Left ventricle myocardium inferior (tissue), 1 donor: ENCODE measurements at regions of chr19 and their contacts with region 1.

Region 1: GRCh38 chr19:54231077-54231931 is 8.5 kb upstream of the LILRB3 start:
- DNase-seq: peak; percentile 84
- H3K4me3 ChIP-seq: no peak overlapping the region
- H3K27ac ChIP-seq: no peak overlapping the region
- H3K4me1 ChIP-seq: no peaks in the 10 kb centered on the region
- H3K27me3 ChIP-seq: peaks cover 48% of the 10 kb centered on the region
- CTCF ChIP-seq: peak; percentile 94

Region 2: DNA sequence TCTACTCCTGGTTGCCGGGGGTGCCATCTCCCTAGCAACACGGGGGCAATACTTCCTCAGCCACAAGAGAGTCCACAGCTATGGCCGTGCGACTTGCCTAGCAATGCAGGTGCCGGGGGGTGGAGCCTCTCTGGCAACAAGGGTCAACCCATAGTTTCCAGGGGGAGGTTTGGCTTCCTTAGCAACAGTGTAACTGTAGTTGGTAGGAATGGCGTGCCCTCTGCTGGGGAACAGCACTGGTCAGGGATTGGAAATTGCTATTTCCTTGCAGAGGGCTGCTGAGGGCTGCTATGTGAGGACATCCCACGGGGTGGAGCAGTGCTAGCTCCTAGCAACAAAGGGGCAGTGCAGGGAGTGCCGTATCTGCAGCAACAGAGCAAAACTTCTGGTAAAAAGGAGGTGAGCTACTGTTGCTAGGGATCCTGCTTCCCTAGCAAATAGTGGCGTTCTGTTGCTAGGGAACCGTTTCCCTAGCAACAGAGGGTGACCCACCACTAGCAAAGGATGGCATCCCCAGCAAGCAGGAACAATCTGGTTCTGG is 51.3 kb before region 1 on chr19:
- intact Hi-C with region 1: loop called (anchors 10 kb)
- DNase-seq: no peak
- H3K4me3 ChIP-seq: no peak overlapping the region
- H3K27ac ChIP-seq: no peak overlapping the region
- H3K4me1 ChIP-seq: no peaks in the 10 kb centered on the region
- H3K27me3 ChIP-seq: no peaks in the 10 kb centered on the region
- CTCF ChIP-seq: peak; percentile 14

Region 3: GRCh38 chr19:54364775-54365257 is 133.5 kb after region 1 on chr19 and contains the start of gene LAIR1:
- intact Hi-C with region 1: no loop called
- DNase-seq: no peak
- H3K4me3 ChIP-seq: peak within 1 kb of the TSS; percentile 41
- H3K27ac ChIP-seq: peak within 1 kb of the TSS; percentile 58
- H3K4me1 ChIP-seq: no peaks in the 10 kb centered on the region
- H3K27me3 ChIP-seq: peaks cover 27% of the 10 kb centered on the region
- CTCF ChIP-seq: no peak
- total RNA-seq, gene LAIR1: 5.1 TPM